Caco-2 (cell line): ENCODE measurements at regions of chrX and their contacts with region 1.

Region 1: DNA sequence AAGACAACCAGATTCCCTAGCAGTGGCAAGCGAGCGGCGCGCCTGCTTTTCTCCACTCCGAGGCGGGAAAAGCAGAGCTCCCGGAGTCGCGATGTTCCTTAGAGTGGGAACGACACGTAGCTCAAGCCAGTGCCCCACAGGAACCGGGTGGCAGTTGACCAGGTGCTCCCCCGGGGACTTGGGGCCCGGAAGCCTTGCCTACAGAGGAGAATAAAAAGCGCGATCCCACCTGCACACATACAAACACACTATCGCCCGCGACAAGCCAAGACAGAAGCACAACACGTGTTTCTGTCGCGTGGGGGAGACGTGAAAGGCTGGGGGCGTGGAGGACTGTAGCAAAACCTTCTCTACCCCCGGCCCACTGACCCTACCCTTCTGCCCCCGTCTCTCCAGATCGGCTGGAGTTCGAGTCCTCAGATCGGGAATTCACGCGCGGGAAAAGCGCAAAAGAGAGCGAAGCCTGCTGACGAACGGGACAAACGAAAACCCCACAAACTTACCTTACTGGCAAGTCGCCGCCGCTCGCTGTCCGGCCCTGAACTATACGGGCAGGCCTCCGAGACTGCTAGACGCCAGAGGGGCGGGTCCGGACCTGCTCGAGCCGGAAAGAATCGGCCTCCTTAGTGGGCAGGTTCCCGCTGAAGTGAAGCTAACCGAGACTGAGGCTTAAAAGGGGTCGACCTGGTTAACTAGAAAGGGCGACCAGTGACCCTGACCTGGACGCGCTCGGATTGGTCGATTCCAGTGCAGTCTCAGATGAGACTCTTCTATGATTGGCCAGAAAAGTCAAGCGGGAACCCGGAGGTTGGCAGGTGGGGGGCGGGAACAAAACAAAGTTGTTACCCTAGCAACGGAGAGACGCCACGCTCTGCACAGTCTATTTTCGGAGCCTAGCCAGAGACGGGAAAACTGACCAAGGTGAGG is at the starts of genes DNAAF6 and NUP62CL:
- DNase-seq: peak; percentile 83 to 88
- H3K4me3 ChIP-seq: peak within 1 kb of the TSS; percentile 62
- H3K4me3 Mint-ChIP-seq: peak within 1 kb of the TSS; percentile 77
- H3K27ac Mint-ChIP-seq: peak within 1 kb of the TSS; percentile 59
- H3K4me1 ChIP-seq: no peaks in the 10 kb centered on the region
- H3K4me1 Mint-ChIP-seq: no peaks in the 10 kb centered on the region
- H3K27me3 ChIP-seq: no peaks in the 10 kb centered on the region
- H3K27me3 Mint-ChIP-seq: no peaks in the 10 kb centered on the region
- CTCF ChIP-seq: no peak
- total RNA-seq, gene DNAAF6: not detected in 2 replicates
- total RNA-seq, gene NUP62CL: 1.00 and 1.5 TPM in 2 replicates

Region 2: DNA sequence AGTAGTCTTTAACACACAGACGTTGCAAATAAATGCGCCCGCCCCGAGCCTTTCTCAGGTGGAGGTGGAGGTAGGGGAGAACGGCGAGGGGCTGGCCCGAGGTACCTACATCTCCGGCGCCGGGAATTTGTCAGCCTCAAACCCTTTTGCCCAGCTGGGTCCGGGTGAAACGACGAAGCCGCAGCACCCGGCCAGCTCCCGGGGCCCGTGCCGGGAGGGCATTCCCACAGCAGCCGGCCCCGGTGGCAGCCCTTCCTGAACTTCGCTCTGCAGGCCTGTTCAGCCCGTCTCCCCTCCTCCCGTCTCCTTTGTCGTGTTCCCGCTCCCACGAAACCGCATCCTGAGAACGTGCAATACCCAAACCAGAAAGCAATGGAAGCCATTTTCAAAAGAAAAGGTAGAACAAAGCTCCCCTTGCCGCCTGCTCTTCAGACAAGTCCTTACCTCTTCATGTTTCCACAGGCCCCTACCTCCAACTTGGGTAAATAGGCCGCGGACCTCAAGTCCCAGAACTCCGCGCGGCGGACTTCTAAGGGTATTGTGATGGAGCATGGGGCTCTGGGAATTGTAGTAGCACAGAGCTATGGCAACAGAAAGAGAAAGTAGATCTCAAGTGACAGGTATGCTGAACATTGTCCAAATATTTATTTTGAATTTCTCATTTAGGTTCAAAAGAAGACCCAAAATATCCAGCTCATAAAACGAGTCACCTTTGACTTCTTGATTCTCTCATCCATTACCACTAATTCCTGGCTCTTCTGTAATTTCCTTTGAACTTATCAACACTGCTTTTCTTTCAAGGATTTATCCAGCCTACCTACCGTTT is 87.5 kb before region 1 on chrX and contains the start of gene RBM41:
- CTCF ChIA-PET with region 1: no interaction called
- POLR2A ChIA-PET with region 1: no interaction called
- intact Hi-C with region 1: loop called (anchors 10 kb)
- DNase-seq: peak; percentile 76 to 80
- H3K4me3 ChIP-seq: peak within 1 kb of the TSS; percentile 64
- H3K4me3 Mint-ChIP-seq: peak within 1 kb of the TSS; percentile 99
- H3K27ac Mint-ChIP-seq: peak within 1 kb of the TSS; percentile 96
- H3K4me1 ChIP-seq: no peaks in the 10 kb centered on the region
- H3K4me1 Mint-ChIP-seq: peaks cover 11% of the 10 kb centered on the region
- H3K27me3 ChIP-seq: no peaks in the 10 kb centered on the region
- H3K27me3 Mint-ChIP-seq: no peaks in the 10 kb centered on the region
- CTCF ChIP-seq: no peak
- total RNA-seq, gene RBM41: 11.8 and 16.3 TPM in 2 replicates

Region 3: DNA sequence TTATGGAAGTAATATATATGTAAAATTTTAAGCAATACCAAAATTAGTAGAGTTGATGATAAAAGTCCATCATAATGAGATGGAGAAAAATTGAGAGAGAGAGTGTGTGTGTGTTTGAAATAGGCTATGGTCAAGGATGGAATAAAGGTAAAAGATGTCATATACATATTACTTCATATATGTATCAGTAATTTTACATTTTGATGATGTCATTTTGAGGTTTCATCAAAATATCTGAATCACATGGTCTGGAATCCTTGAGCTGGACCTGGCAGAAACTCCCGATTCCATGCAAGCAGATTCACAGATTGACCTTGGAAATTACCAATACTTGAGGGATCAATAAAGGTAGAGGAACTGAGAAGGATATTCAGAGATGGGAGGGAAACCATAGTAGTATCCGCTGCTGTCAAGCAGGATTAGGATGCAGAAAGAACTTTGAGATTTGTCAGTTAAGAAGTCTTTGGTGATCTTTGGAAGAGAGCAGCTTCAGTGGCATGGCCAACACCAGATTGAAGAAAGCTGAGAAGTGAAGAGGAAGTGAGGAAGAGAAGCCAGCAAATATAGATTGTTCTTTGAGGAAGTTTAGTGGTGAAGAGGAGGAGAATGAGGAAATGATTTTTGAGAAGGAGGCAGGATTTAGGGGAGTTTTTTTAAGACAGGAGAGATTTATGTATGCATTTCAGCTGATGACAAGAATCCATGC is 21.9 kb after region 1 on chrX:
- CTCF ChIA-PET with region 1: no interaction called
- POLR2A ChIA-PET with region 1: no interaction called
- intact Hi-C with region 1: no loop called
- DNase-seq: no peak
- H3K4me3 ChIP-seq: no peak overlapping the region
- H3K4me3 Mint-ChIP-seq: no peak overlapping the region
- H3K27ac Mint-ChIP-seq: no peak overlapping the region
- H3K4me1 ChIP-seq: no peaks in the 10 kb centered on the region
- H3K4me1 Mint-ChIP-seq: no peaks in the 10 kb centered on the region
- H3K27me3 ChIP-seq: no peaks in the 10 kb centered on the region
- H3K27me3 Mint-ChIP-seq: no peaks in the 10 kb centered on the region
- CTCF ChIP-seq: no peak